ENCODE measurements at regions of chr1 and their contacts with region 1.

Region 1: DNA sequence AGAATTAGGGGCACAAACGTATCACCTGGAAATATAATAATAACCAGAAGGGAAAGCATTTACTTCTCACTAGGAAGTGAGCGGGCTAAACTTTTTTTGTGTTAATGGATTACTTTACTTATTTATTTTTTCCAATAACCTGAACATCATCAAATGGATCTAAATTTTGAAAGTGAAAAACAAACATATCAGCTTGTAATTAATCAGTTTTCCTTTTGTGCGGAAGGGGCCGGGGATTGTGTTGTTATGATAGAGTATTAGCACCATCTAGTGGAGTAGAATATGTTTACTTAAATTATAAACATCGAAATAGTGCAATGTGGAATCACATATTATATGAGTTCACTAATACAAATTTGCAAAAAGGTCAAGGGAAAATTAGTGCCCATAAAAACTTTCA is 9.0 kb downstream of the CFH start:
- DNase-seq: no peak
- H3K4me3 ChIP-seq: peak overlapping the region in 3 of 4 donors; percentile 10 to 32 (median 22)
- H3K27ac ChIP-seq: no peak overlapping the region
- H3K4me1 ChIP-seq: peaks cover 0 to 5% (median 0%) of the 10 kb centered on the region in 4 donors
- H3K27me3 ChIP-seq: no peaks in the 10 kb centered on the region
- CTCF ChIP-seq: peak; percentile 32 to 55 (median 38)
- EP300 ChIP-seq: no peak
- POLR2A ChIP-seq: no peak

Region 2: DNA sequence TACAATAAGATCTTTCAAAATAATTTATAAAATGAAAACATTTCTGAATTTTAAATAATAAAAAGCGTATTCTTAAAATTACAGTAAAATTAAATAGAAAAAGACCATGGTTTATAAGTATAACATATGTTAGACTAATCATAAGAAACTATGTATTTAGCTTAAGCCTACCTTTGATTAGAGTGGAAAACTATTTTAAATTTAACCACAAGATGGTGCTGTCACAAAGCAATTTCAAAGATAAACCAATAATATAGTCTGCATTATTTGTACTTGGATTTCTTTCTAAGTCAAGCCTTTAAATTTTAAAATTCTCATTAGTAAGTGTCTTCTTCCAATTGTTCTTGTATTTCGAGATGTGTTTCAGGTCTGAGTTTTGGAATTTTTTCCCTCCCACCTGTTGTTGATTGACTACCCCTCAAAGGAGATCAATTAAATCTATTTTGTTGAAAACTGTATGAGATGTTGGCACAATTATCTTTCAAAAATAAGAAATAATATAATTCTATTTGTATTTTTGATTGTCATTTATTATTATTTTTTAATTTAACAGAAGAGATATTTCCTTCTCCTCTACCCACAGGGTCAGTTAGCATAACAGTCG is 512.4 kb before region 1 on chr1:
- intact Hi-C with region 1: loop called (anchors 2 kb)
- DNase-seq: no peak
- H3K4me3 ChIP-seq: no peak overlapping the region
- H3K27ac ChIP-seq: no peak overlapping the region
- H3K4me1 ChIP-seq: no peaks in the 10 kb centered on the region
- H3K27me3 ChIP-seq: no peaks in the 10 kb centered on the region
- CTCF ChIP-seq: peak in 3 of 4 experiments; percentile 12 to 54 (median 25)
- EP300 ChIP-seq: no peak
- POLR2A ChIP-seq: no peak

Region 3: GRCh38 chr1:196317535-196318522 is 343.0 kb before region 1 on chr1:
- intact Hi-C with region 1: loop called (anchors 2 kb)
- DNase-seq: no peak
- H3K4me3 ChIP-seq: no peak overlapping the region
- H3K27ac ChIP-seq: no peak overlapping the region
- H3K4me1 ChIP-seq: no peaks in the 10 kb centered on the region
- H3K27me3 ChIP-seq: no peaks in the 10 kb centered on the region
- CTCF ChIP-seq: peak in 2 of 4 experiments; percentile 41
- EP300 ChIP-seq: no peak
- POLR2A ChIP-seq: no peak

Region 4: GRCh38 chr1:196355206-196355786 is 305.6 kb before region 1 on chr1:
- intact Hi-C with region 1: loop called (anchors 2 kb)
- DNase-seq: no peak
- H3K4me3 ChIP-seq: no peak overlapping the region
- H3K27ac ChIP-seq: no peak overlapping the region
- H3K4me1 ChIP-seq: no peaks in the 10 kb centered on the region
- H3K27me3 ChIP-seq: no peaks in the 10 kb centered on the region
- CTCF ChIP-seq: peak in 2 of 4 experiments; percentile 20 to 47
- EP300 ChIP-seq: no peak
- POLR2A ChIP-seq: no peak

Region 5: DNA sequence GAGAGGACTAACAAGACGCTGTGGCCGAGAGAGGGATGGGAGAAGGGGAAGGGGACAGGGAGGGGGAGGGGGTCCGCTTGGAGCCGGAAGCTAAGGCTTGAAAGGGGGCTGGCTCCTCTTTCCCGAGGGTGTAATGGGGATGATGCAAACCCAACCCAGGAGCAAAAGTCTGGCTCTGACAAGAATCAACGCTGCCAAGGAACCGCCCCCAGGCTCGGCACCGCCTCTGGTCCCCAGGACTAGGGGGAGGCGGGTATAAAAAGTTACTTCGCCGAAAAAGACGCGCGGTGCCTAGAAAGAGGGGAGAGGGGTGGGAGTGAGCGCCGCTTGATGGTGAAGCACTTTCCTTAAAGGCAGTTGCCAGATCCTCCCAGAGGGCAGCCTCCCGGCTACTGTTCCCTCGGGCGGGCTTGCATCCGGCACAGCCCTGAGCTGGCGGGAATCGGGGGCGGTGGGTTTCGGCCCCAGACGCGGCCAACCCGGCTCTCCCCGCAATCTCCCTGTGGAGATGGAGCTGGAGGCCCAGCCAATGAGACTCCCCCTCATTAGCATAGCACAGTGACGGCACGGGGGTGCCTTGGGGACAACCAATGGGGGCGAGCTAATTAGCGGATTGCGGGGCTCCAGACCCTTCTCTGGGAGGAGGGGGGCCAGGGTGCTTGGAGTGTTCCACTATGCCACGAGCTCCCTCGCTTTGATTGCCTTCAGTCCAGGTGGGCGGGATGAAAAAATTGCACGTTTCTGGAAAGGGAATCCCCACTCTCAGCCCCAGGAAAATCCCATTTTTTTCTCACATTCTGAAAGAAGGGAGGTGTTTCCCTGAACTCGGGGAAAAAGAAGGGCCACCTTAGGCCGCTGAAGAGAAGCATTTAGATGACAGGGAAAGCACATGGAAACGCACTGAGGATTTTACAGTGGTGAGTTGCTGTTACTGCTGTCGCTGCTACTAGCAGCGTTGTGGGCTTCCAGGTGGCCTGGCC is 52.2 kb before region 1 on chr1 and contains the start of gene KCNT2:
- intact Hi-C with region 1: no loop called
- DNase-seq: peak; percentile 87
- H3K4me3 ChIP-seq: peak within 1 kb of the TSS; percentile 35 to 63 (median 57)
- H3K27ac ChIP-seq: peak within 1 kb of the TSS; percentile 70 to 84 (median 72)
- H3K4me1 ChIP-seq: peaks cover 0 to 19% (median 9%) of the 10 kb centered on the region in 4 donors
- H3K27me3 ChIP-seq: no peaks in the 10 kb centered on the region
- CTCF ChIP-seq: no peak
- EP300 ChIP-seq: no peak
- POLR2A ChIP-seq: no peak
- total RNA-seq, gene KCNT2: 1.8 to 3.1 (median 2.6) TPM